ENCODE measurements at regions of chr17 and their contacts with region 1.

Region 1: GRCh38 chr17:68356520-68356919 is 65.2 kb downstream of the ARSG start:
- DNase-seq: peak in 8 of 9 donors; percentile 67 to 86 (median 80)
- ATAC-seq: peak; percentile 98
- H3K4me3 ChIP-seq: peak overlapping the region; percentile 33
- H3K4me3 Mint-ChIP-seq: peak overlapping the region; percentile 73 to 86 (median 80)
- H3K27ac ChIP-seq: peak overlapping the region; percentile 24
- H3K27ac Mint-ChIP-seq: peak overlapping the region; percentile 24 to 91 (median 82)
- H3K4me1 ChIP-seq: peaks cover 54 to 56% of the 10 kb centered on the region in 2 donors
- H3K4me1 Mint-ChIP-seq: peaks cover 43 to 69% (median 62%) of the 10 kb centered on the region in 7 donors
- H3K27me3 ChIP-seq: no peaks in the 10 kb centered on the region
- H3K27me3 Mint-ChIP-seq: no peaks in the 10 kb centered on the region

Region 2: GRCh38 chr17:67359960-67360773 is 996.4 kb before region 1 on chr17:
- CTCF ChIA-PET with region 1: no interaction called
- POLR2A ChIA-PET with region 1: no interaction called
- intact Hi-C with region 1: no loop called
- DNase-seq: peak in 7 of 9 donors; percentile 54 to 78 (median 70)
- ATAC-seq: peak; percentile 97
- H3K4me3 ChIP-seq: no peak overlapping the region
- H3K4me3 Mint-ChIP-seq: peak overlapping the region; percentile 6 to 77 (median 49)
- H3K27ac ChIP-seq: peak overlapping the region; percentile 58
- H3K27ac Mint-ChIP-seq: peak overlapping the region; percentile 60 to 94 (median 80)
- H3K4me1 ChIP-seq: peaks cover 33 to 39% of the 10 kb centered on the region in 2 donors
- H3K4me1 Mint-ChIP-seq: peaks cover 47 to 81% (median 60%) of the 10 kb centered on the region in 7 donors
- H3K27me3 ChIP-seq: no peaks in the 10 kb centered on the region
- H3K27me3 Mint-ChIP-seq: no peaks in the 10 kb centered on the region

Region 3: DNA sequence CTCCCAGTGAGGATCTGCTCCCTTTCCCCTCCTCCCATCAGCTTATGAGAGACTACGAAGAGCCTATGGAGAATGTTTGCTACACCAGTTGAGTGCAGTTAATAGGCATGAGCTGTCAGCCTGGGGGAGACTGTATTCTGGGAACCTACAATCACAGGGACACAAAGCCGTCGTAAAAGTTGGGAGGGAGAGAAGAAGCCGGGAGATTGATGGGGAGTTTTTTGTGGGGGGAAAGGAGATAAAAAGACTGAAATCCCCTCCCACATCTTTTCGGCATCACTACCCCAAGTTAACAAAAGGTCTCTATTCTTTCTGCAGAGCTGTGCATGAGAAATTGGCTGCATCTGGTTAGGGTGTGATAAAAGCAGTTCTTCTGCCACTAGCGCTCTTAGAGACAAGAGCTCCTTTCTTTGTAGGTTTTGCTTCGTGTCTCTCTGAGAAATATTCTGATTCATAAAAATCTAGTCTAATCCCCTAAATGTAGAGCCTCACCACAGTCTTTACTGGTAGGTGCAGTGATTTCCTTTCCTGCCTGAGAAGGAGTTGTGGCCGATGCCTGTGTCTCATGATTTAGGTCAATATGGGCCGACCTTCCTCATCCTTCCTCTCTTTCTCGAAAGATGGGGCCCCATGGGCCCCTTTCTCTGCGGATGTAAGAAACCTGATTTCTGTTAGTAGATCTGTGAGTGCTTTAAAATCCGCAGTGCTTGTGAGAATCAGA is 453.8 kb before region 1 on chr17:
- CTCF ChIA-PET with region 1: no interaction called
- POLR2A ChIA-PET with region 1: no interaction called
- intact Hi-C with region 1: no loop called
- DNase-seq: no peak
- ATAC-seq: no peak
- H3K4me3 ChIP-seq: no peak overlapping the region
- H3K4me3 Mint-ChIP-seq: no peak overlapping the region
- H3K27ac ChIP-seq: no peak overlapping the region
- H3K27ac Mint-ChIP-seq: peak overlapping the region in 6 of 9 donors; percentile 1 to 91 (median 37)
- H3K4me1 ChIP-seq: no peaks in the 10 kb centered on the region
- H3K4me1 Mint-ChIP-seq: peaks cover 0 to 3% (median 0%) of the 10 kb centered on the region in 7 donors
- H3K27me3 ChIP-seq: no peaks in the 10 kb centered on the region
- H3K27me3 Mint-ChIP-seq: no peaks in the 10 kb centered on the region

Region 4: DNA sequence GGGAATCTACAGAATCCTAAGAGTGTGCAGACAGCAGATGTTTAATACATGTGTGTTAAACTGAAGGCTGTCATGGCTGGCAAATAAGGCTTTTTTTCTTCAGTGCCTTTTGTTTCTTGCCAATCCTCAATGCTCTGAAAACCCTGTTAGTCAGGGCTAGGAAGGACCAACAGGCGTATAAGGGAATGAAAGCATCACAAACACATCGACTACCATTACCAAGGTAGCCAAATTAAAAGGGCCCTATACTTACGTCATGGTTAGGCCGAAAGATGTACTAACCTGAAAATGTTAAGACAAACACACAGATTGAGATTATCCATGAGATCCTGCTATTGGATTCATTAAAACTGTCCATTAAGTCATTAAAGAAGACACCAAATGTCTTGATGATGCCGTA is 78.7 kb before region 1 on chr17:
- CTCF ChIA-PET with region 1: no interaction called
- POLR2A ChIA-PET with region 1: no interaction called
- intact Hi-C with region 1: no loop called
- DNase-seq: no peak
- ATAC-seq: no peak
- H3K4me3 ChIP-seq: no peak overlapping the region
- H3K4me3 Mint-ChIP-seq: no peak overlapping the region
- H3K27ac ChIP-seq: no peak overlapping the region
- H3K27ac Mint-ChIP-seq: no peak overlapping the region
- H3K4me1 ChIP-seq: no peaks in the 10 kb centered on the region
- H3K4me1 Mint-ChIP-seq: peaks cover 0 to 18% (median 9%) of the 10 kb centered on the region in 7 donors
- H3K27me3 ChIP-seq: no peaks in the 10 kb centered on the region
- H3K27me3 Mint-ChIP-seq: no peaks in the 10 kb centered on the region

Region 5: GRCh38 chr17:68324114-68324513 is 32.4 kb before region 1 on chr17:
- CTCF ChIA-PET with region 1: no interaction called
- POLR2A ChIA-PET with region 1: interaction called, 11 read pairs
- intact Hi-C with region 1: no loop called
- DNase-seq: no peak
- ATAC-seq: no peak
- H3K4me3 ChIP-seq: no peak overlapping the region
- H3K4me3 Mint-ChIP-seq: peak overlapping the region in 4 of 10 donors; percentile 13 to 40 (median 26)
- H3K27ac ChIP-seq: no peak overlapping the region
- H3K27ac Mint-ChIP-seq: peak overlapping the region in 2 of 9 donors; percentile 28 to 40
- H3K4me1 ChIP-seq: peaks cover 7 to 8% of the 10 kb centered on the region in 2 donors
- H3K4me1 Mint-ChIP-seq: peaks cover 7 to 45% (median 19%) of the 10 kb centered on the region in 7 donors
- H3K27me3 ChIP-seq: no peaks in the 10 kb centered on the region
- H3K27me3 Mint-ChIP-seq: no peaks in the 10 kb centered on the region

Region 6: GRCh38 chr17:68398691-68399637 is 42.4 kb after region 1 on chr17:
- CTCF ChIA-PET with region 1: no interaction called
- POLR2A ChIA-PET with region 1: interaction called, 9 read pairs
- intact Hi-C with region 1: loop called (anchors 2 to 5 kb)
- DNase-seq: no peak
- ATAC-seq: peak; percentile 87
- H3K4me3 ChIP-seq: no peak overlapping the region
- H3K4me3 Mint-ChIP-seq: peak overlapping the region in 9 of 10 donors; percentile 0 to 73 (median 34)
- H3K27ac ChIP-seq: no peak overlapping the region
- H3K27ac Mint-ChIP-seq: peak overlapping the region in 5 of 9 donors; percentile 10 to 85 (median 48)
- H3K4me1 ChIP-seq: peaks cover 13 to 34% of the 10 kb centered on the region in 2 donors
- H3K4me1 Mint-ChIP-seq: peaks cover 15 to 37% (median 35%) of the 10 kb centered on the region in 7 donors
- H3K27me3 ChIP-seq: no peaks in the 10 kb centered on the region
- H3K27me3 Mint-ChIP-seq: no peaks in the 10 kb centered on the region

Region 7: DNA sequence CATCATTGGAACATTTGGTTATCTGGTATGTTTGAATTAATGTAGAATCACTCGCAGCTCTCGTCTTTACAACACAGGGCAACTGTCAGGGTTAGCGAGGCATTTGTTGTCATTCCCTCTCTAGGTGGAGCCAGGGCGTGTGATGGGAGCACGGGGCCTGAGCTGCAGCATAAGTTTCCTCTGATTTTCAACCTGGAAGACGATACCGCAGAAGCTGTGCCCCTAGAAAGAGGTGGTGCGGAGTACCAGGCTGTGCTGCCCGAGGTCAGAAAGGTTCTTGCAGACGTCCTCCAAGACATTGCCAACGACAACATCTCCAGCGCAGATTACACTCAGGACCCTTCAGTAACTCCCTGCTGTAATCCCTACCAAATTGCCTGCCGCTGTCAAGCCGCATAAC is 63.5 kb after region 1 on chr17:
- CTCF ChIA-PET with region 1: no interaction called
- POLR2A ChIA-PET with region 1: interaction called, 3 read pairs
- intact Hi-C with region 1: loop called in 1 of 2 experiments (anchors 5 kb)
- DNase-seq: no peak
- ATAC-seq: no peak
- H3K4me3 ChIP-seq: no peak overlapping the region
- H3K4me3 Mint-ChIP-seq: no peak overlapping the region
- H3K27ac ChIP-seq: no peak overlapping the region
- H3K27ac Mint-ChIP-seq: peak overlapping the region in 2 of 9 donors; percentile 45 to 55
- H3K4me1 ChIP-seq: peaks cover 0 to 9% of the 10 kb centered on the region in 2 donors
- H3K4me1 Mint-ChIP-seq: peaks cover 5 to 30% (median 22%) of the 10 kb centered on the region in 7 donors
- H3K27me3 ChIP-seq: no peaks in the 10 kb centered on the region
- H3K27me3 Mint-ChIP-seq: no peaks in the 10 kb centered on the region

Region 8: DNA sequence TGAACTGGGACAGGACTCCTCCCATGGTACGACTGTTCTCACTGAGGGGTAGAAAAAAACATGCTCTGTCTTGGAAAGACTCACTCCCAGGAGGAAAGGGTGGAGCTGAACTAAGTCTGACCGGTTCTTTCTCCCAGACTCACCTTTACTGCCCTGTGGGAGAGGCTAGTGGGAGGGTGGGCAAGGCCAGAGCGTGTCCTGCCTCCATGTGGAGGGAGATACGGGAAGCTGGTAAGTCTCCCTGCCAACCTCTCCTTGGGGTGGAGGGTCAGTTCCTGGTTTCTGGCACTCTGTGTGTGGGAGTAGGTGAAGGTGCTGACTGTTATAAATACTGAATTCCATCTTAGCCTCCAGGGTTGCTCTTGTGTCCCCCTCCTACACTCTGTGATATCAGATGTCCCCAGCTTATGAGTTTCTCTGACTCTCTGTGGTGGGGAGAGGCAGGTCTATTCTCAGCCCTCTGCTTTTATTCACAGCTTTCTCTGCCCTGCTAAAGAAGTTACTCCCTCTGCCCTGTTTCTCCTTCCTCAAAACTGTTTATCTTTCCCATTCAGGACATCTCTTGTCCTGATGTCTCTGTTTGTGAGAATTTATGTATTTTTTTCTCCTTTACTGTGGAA is 271.5 kb after region 1 on chr17:
- CTCF ChIA-PET with region 1: no interaction called
- POLR2A ChIA-PET with region 1: no interaction called
- intact Hi-C with region 1: no loop called
- DNase-seq: no peak
- ATAC-seq: no peak
- H3K4me3 ChIP-seq: no peak overlapping the region
- H3K4me3 Mint-ChIP-seq: no peak overlapping the region
- H3K27ac ChIP-seq: no peak overlapping the region
- H3K27ac Mint-ChIP-seq: no peak overlapping the region
- H3K4me1 ChIP-seq: no peaks in the 10 kb centered on the region
- H3K4me1 Mint-ChIP-seq: no peaks in the 10 kb centered on the region
- H3K27me3 ChIP-seq: no peaks in the 10 kb centered on the region
- H3K27me3 Mint-ChIP-seq: peaks cover 0 to 31% (median 16%) of the 10 kb centered on the region in 5 donors

Measured in naive thymus-derived CD4-positive, alpha-beta T cell (primary cell).